Activated naive CD4-positive, alpha-beta T cell treated with anti-CD3 and anti-CD28 coated beads, Interleukin-2, amount 10 ng/mL, durations not matched to agents 7 days and 5 days (primary cell): ENCODE measurements at regions of chr1 and their contacts with region 1.

Region 1: GRCh38 chr1:35726450-35727433 is 8.1 kb upstream of the C1orf216 start:
- DNase-seq: peak; percentile 55
- H3K4me3 Mint-ChIP-seq: no peak overlapping the region
- H3K27ac Mint-ChIP-seq: no peak overlapping the region
- H3K4me1 Mint-ChIP-seq: no peaks in the 10 kb centered on the region
- H3K27me3 Mint-ChIP-seq: no peaks in the 10 kb centered on the region

Region 2: DNA sequence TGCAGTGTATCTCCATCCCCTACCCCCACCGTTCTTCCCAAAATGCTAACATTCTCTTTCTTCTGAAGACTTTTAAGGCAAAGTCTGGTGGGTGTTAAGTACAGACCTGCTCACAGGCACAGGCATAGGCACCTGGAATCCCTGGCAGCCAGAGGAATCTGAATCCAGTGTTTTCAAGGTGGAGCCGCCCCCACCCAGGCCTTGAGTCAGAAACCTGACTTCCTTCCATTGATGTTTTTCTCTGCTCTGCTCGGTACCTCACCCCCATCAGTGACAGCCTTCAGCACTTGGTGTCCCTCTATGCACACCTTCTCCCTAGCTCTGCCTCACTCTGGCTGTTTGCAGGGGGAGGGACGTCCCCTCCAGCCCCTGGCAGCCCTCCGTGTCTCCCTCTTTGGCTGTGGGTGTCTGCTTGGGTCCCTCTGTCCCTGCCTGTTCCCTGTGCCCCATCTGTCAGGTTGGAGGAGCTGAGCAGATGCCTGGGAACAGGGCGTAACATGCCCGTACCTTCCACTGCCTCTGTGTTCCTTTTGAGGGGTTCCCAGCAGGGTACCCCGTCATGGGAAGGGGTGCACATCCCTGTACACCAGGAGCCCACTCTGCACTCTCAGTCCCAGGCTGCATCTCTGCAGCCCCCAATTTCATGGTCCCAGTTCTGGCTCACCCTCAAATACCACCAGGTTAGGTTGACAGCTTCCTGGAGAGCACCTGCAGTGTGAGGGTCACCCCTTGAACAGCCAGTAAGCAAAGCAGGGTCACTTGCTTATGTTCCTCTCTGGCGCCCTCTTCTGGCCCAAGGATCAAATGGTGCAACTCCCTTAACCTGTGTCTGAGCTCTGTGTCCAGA is 162.5 kb before region 1 on chr1:
- CTCF ChIA-PET with region 1: interaction called, 62 read pairs
- DNase-seq: peak; percentile 91
- H3K4me3 Mint-ChIP-seq: no peak overlapping the region
- H3K27ac Mint-ChIP-seq: no peak overlapping the region
- H3K4me1 Mint-ChIP-seq: peaks cover 16% of the 10 kb centered on the region
- H3K27me3 Mint-ChIP-seq: no peaks in the 10 kb centered on the region

Region 3: DNA sequence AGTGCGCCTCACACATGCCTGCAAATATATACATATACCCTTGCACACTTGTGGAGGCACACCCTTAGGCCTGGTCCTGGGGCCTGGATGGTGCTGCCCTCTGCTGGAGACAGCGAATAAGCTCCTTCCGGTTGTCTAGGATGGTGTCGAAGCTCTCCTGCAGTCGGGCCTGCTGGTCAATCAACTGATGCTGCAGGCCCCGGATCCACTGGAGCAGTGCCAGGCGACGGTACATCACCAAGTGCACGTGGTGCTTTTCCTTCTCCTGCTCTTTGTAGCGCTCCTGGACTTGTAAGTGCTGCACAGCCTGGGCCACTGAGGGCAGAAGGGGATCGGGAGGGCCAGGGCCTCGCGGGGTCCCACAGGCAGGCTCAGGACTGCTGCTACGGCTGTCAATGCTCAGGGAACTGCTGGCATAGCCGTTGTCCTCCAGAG is 11.2 kb before region 1 on chr1:
- CTCF ChIA-PET with region 1: interaction called, 52 read pairs
- DNase-seq: peak; percentile 87
- H3K4me3 Mint-ChIP-seq: no peak overlapping the region
- H3K27ac Mint-ChIP-seq: no peak overlapping the region
- H3K4me1 Mint-ChIP-seq: peaks cover 31% of the 10 kb centered on the region
- H3K27me3 Mint-ChIP-seq: peaks cover 3% of the 10 kb centered on the region

Region 4: GRCh38 chr1:35745124-35745730 is 18.5 kb after region 1 on chr1:
- CTCF ChIA-PET with region 1: interaction called, 11 read pairs
- DNase-seq: no peak
- H3K4me3 Mint-ChIP-seq: no peak overlapping the region
- H3K27ac Mint-ChIP-seq: no peak overlapping the region
- H3K4me1 Mint-ChIP-seq: no peaks in the 10 kb centered on the region
- H3K27me3 Mint-ChIP-seq: no peaks in the 10 kb centered on the region

Region 5: DNA sequence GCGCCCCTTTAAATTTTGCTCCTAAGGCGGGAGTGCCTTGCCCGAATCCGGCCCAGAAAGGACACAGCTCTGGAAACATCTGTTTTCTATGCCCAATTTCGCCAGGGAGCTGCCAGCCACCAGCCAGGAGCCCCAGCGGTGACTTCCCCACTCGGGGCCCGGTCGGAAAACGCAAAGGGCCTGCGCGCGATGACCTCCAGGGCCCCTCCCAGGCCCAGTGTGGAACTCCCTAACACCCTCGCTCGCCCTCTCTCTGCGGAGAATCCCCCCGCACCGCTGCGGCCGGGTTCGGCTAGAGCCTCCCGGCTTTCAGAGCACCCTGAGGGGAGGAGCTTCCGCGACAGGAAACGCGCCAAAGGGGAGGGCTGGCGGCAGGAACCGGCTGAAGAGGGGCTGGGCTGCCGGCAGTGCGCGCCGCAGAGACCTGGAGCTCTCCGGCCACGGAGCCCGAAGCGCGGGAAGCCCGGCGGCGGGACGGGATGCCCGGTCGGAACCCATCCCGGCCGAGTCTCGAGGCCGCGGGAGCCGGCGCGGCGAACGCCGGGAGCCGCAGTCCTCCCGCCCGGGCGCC is 42.5 kb after region 1 on chr1:
- CTCF ChIA-PET with region 1: interaction called, 12 read pairs
- DNase-seq: peak; percentile 93
- H3K4me3 Mint-ChIP-seq: peak overlapping the region; percentile 99
- H3K27ac Mint-ChIP-seq: peak overlapping the region; percentile 85
- H3K4me1 Mint-ChIP-seq: peaks cover 42% of the 10 kb centered on the region
- H3K27me3 Mint-ChIP-seq: no peaks in the 10 kb centered on the region